WTC11 (cell line): ENCODE measurements at regions of chr4 and their contacts with region 1.

Region 1: GRCh38 chr4:153083447-153083947 is 120.7 kb upstream of the TRIM2 start:
- DNase-seq: peak; percentile 68
- ATAC-seq: peak; percentile 87
- H3K4me3 Mint-ChIP-seq: no peak overlapping the region
- H3K27ac Mint-ChIP-seq: peak overlapping the region; percentile 60
- H3K4me1 Mint-ChIP-seq: peaks cover 56% of the 10 kb centered on the region
- H3K27me3 Mint-ChIP-seq: peaks cover 14% of the 10 kb centered on the region; the same call in 1 of the 2 replicates
- CTCF ChIP-seq: no peak

Region 2: DNA sequence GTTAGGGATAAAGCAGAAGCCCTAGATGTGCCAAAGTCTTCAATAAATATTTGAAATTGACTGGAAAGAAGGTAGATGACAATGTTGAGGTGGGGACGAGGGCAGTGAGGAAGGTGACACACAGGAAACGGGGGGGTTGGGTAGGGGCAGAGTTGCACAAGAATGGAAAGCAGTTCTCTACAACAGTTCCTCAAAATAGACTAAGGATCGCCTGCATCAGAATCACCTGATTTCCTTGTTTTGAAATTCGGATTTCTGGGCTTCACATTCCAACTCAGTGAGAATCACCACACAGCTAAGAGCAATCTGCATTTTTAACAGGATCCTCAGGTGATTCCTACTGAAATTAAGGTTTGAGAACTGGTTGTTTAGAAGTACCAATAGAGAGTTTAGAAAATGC is 233.1 kb before region 1 on chr4:
- CTCF ChIA-PET with region 1: interaction called, 13 read pairs
- POLR2A ChIA-PET with region 1: no interaction called
- DNase-seq: peak; percentile 25
- ATAC-seq: peak; percentile 89
- H3K4me3 Mint-ChIP-seq: peak overlapping the region; percentile 48
- H3K27ac Mint-ChIP-seq: peak overlapping the region; percentile 99
- H3K4me1 Mint-ChIP-seq: peaks cover 56% of the 10 kb centered on the region
- H3K27me3 Mint-ChIP-seq: peaks cover 4% of the 10 kb centered on the region; the same call in 1 of the 2 replicates
- CTCF ChIP-seq: no peak

Region 3: DNA sequence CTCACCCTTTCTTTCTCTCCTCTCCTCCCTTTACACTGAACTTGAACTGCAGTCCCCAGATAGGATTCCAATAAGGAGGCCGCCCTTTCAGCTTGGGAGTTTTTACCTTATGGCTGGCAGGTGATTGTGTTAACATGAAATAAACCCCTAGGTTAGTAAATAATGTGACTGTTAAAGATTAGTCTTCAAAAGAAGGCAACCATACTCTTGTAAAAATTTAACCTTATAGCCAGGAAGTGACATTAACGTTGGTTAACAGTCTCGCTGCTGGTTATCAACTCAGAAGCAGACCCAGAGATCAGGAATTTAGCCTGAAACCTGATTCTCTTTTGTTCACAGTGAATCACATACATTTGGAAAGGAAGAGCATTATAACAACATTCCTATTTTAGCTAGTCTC is 132.1 kb before region 1 on chr4:
- CTCF ChIA-PET with region 1: interaction called, 15 read pairs
- POLR2A ChIA-PET with region 1: no interaction called
- DNase-seq: no peak
- ATAC-seq: peak; percentile 45
- H3K4me3 Mint-ChIP-seq: peak overlapping the region; percentile 10
- H3K27ac Mint-ChIP-seq: peak overlapping the region; percentile 98
- H3K4me1 Mint-ChIP-seq: peaks cover 65% of the 10 kb centered on the region
- H3K27me3 Mint-ChIP-seq: no peaks in the 10 kb centered on the region
- CTCF ChIP-seq: no peak

Region 4: DNA sequence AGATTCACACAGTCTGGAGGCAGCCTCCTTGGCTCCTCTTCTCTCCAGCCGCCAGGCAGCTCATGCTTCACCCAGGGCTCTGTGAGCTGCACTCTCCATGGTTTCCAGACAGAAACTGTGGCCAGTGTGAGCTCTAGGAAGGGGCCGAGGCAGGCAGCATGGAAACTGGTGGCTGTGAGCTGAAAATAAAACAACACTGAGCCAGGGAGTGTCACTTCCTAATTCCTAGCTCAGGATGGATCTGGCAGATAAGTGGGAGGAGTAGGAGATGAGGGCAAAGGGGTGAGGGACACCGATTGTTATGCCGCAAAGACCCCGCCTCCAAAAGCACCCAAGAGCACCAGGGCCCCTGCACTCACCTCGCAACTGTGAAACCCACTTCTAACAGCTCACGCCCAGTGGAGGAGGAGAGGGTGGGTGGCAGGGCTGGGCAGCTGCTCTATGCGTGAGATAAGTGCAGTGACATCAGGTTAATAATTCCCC is 77.6 kb before region 1 on chr4:
- CTCF ChIA-PET with region 1: interaction called, 14 read pairs
- POLR2A ChIA-PET with region 1: no interaction called
- DNase-seq: no peak
- ATAC-seq: peak; percentile 16
- H3K4me3 Mint-ChIP-seq: no peak overlapping the region
- H3K27ac Mint-ChIP-seq: no peak overlapping the region
- H3K4me1 Mint-ChIP-seq: peaks cover 58% of the 10 kb centered on the region
- H3K27me3 Mint-ChIP-seq: no peaks in the 10 kb centered on the region
- CTCF ChIP-seq: no peak

Region 5: DNA sequence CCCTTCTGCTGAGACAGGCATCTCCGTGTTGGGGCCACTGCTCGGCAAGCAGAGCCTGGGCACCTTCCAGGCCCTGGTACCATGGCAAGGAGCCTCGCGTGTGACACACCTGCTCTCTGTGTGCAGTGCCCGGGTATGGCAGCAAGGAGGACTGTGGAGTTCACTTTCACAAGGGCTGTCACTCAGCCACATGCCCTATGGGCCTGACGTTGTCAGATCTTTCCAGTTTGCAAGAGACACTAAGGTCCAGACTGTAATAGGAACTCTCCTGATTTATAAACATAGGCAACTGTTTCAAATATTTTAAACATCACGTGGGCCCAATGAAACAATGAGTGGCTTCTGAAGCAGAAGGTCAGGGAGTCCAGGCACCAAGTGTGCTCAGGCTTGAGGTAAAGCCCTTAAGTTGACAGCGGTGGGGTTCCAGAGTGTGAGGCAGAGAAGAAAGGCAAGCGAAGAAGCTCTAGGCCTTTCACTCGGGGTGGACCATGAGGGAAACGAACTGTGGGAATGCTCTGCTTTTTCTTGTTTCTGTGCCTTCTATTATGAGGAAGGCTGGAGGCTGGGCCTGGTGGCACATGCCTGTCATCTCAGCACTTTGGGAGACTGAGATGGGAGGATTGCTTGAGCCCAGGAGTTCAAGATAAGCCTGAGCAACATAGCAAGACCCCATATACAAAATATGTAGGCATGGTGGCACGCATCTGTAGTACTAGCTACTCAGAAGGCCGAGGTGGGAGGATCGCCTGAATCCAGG is 12.1 kb after region 1 on chr4:
- CTCF ChIA-PET with region 1: interaction called, 23 read pairs
- POLR2A ChIA-PET with region 1: no interaction called
- DNase-seq: no peak
- ATAC-seq: no peak
- H3K4me3 Mint-ChIP-seq: no peak overlapping the region
- H3K27ac Mint-ChIP-seq: no peak overlapping the region
- H3K4me1 Mint-ChIP-seq: peaks cover 9% of the 10 kb centered on the region
- H3K27me3 Mint-ChIP-seq: peaks cover 2% of the 10 kb centered on the region; the same call in 1 of the 2 replicates
- CTCF ChIP-seq: no peak

Region 6: GRCh38 chr4:153127760-153128494 is 44.4 kb after region 1 on chr4:
- CTCF ChIA-PET with region 1: interaction called, 94 read pairs
- POLR2A ChIA-PET with region 1: no interaction called
- DNase-seq: peak; percentile 91
- ATAC-seq: peak; percentile 78
- H3K4me3 Mint-ChIP-seq: peak overlapping the region; percentile 47
- H3K27ac Mint-ChIP-seq: peak overlapping the region; percentile 84
- H3K4me1 Mint-ChIP-seq: peaks cover 18% of the 10 kb centered on the region
- H3K27me3 Mint-ChIP-seq: peaks cover 2% of the 10 kb centered on the region; the same call in 1 of the 2 replicates
- CTCF ChIP-seq: peak; percentile 71

Region 7: GRCh38 chr4:153153339-153153871 is 69.9 kb after region 1 on chr4:
- CTCF ChIA-PET with region 1: no interaction called
- POLR2A ChIA-PET with region 1: no interaction called
- DNase-seq: peak; percentile 68
- ATAC-seq: peak; percentile 80
- H3K4me3 Mint-ChIP-seq: peak overlapping the region; percentile 78
- H3K27ac Mint-ChIP-seq: no peak overlapping the region
- H3K4me1 Mint-ChIP-seq: peaks cover 56% of the 10 kb centered on the region
- H3K27me3 Mint-ChIP-seq: peaks cover 71% of the 10 kb centered on the region
- CTCF ChIP-seq: no peak